ENCODE measurements at regions of chr4 and their contacts with region 1.

Region 1: DNA sequence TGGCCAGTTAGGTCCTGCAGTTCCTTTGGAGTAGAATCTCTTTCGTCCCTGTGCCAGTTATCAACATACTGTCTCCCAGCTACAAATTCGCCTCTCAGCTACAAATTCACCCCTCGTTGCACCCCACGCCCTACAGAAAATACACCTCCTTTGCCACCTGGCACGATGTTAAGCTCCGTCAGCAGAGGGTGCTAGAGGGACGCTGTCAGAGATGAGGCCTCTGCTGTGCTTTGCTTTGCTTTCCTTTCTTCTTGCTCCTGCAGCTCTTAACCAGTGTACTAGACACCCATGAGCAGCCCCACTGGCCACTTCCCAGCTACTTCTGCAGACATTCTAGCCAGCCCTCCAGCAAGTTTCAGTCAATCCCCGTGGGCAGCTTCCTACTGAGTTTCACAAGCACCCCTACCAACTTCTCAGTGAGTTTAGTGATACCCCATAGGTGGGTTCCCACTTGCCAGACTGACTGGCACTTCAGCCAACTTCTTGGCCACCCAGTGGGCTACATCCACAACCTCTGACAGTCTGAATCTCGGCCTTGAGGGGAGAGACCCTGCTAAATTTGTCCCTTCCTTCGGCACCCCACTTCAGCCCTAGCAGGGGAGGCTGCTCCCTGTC is 21.8 kb downstream of the HAUS3 start:
- DNase-seq: peak; percentile 90
- H3K4me3 Mint-ChIP-seq: no peak overlapping the region
- H3K27ac Mint-ChIP-seq: no peak overlapping the region
- H3K4me1 Mint-ChIP-seq: peaks cover 3% of the 10 kb centered on the region
- H3K27me3 Mint-ChIP-seq: peaks cover 4% of the 10 kb centered on the region

Region 2: GRCh38 chr4:2231082-2231481 is 11.0 kb after region 1 on chr4:
- CTCF ChIA-PET with region 1: interaction called, 17 read pairs
- DNase-seq: no peak
- H3K4me3 Mint-ChIP-seq: no peak overlapping the region
- H3K27ac Mint-ChIP-seq: no peak overlapping the region
- H3K4me1 Mint-ChIP-seq: peaks cover 8% of the 10 kb centered on the region
- H3K27me3 Mint-ChIP-seq: no peaks in the 10 kb centered on the region

Region 3: DNA sequence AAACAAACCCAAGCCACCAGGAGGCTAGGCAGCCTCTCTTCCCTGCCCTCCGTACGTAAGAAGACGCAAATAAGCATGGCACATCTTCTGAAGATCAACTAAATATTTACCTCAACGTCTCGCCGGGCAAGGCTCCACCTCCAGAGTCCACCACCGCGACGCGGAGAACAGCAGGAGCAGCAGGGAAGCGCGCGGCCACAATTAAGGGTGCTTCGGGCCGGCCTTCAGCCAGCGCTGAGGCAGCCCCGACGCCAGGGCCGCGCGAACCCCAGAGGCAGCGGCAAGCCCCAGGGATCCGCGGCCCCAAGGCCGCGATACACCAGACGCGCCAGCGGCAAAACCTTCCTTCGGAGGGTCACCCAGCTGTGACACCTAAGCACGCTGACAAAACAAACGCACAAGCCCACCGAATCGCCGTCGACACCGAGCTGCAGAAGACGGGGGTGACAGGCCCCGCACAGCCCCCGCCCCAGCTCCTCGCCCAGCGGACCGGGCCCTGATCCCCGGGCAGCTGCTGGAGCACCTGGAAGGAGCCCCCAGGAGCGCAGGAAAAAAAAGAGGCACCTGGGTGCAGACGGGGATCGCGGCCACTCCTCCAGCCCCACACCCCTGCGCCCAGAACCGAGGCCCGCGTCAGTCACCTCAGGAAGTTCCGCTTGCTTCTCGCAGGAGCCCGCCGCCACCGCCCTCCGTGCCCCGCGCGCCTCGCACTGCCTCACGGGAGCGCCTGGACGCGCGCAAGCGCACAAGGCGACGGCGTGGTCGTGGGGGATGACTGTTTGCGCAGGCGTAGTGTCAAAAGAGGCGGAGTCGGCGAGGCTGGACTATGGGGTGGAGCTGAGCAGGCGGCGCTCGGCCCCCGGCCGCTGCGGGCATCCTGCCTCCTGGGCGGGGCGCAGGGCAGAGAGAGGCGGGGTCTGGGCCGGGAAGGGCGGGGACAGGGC is 21.6 kb after region 1 on chr4 and contains the starts of genes HAUS3 and POLN:
- CTCF ChIA-PET with region 1: interaction called, 14 read pairs
- DNase-seq: peak; percentile 99
- H3K4me3 Mint-ChIP-seq: peak within 1 kb of the TSS; percentile 93
- H3K27ac Mint-ChIP-seq: peak within 1 kb of the TSS; percentile 95
- H3K4me1 Mint-ChIP-seq: peaks cover 57% of the 10 kb centered on the region
- H3K27me3 Mint-ChIP-seq: peaks cover 13% of the 10 kb centered on the region

Region 4: DNA sequence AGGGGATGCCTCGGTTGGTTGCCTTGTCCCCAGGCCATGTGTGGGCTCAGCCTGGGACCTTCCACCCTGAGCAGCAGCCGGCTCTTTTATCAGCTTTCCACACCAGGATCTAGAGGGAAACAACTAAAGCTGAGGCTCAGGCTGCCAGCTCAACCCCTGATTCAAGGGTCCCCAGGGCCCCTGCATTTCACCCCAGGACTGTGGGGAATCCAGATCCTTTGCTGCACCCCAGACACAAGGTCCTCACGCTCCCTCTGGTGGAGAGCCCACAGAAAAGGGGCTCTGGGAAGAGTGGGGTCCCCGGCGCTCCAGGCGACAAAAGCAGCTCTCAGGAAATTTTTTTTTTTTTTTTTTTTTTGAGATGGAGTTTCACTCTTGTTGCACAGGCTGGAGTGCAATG is 134.0 kb after region 1 on chr4:
- CTCF ChIA-PET with region 1: interaction called, 12 read pairs
- DNase-seq: peak; percentile 50
- H3K4me3 Mint-ChIP-seq: no peak overlapping the region
- H3K27ac Mint-ChIP-seq: no peak overlapping the region
- H3K4me1 Mint-ChIP-seq: peaks cover 4% of the 10 kb centered on the region
- H3K27me3 Mint-ChIP-seq: peaks cover 4% of the 10 kb centered on the region

Region 5: DNA sequence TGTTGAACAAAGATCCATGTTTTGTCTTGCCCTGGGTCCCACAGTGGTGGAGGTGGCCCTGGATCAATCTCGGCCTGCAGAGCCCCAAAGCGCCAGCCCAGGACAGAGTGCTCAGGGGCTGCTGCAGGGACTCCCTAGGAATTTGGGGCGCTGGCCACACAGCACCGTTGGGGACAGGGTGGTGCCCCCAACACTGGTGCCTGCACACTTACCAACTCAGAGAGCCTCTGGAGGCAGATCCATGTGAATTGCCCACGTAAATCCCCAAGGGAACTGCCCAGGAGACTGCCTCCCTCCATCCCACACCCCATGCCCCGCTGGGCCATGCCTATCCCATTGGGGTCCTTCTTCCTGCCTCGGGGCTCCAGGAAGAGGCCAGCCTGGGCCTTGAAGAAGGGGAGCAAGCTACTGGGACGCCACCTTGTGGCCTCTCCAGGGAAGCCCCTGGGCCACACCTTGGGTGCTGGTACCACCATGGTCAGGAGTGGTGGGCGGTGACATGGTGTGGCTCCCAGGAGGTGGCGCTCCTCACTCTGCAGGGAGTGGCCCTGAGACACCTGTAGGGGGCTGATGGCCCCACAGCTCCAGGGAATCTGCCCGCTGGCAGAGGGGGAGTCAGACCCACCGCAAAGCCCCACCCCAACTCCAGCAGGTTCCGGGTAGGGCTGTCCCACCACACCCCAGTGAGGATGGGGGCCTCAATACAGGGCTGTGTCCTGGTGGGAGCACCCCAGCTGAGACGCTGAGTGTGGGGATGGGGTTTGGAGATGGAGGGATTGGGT is 221.5 kb after region 1 on chr4:
- CTCF ChIA-PET with region 1: interaction called, 42 read pairs
- DNase-seq: peak; percentile 87
- H3K4me3 Mint-ChIP-seq: no peak overlapping the region
- H3K27ac Mint-ChIP-seq: no peak overlapping the region
- H3K4me1 Mint-ChIP-seq: peaks cover 4% of the 10 kb centered on the region
- H3K27me3 Mint-ChIP-seq: peaks cover 16% of the 10 kb centered on the region

Region 6: DNA sequence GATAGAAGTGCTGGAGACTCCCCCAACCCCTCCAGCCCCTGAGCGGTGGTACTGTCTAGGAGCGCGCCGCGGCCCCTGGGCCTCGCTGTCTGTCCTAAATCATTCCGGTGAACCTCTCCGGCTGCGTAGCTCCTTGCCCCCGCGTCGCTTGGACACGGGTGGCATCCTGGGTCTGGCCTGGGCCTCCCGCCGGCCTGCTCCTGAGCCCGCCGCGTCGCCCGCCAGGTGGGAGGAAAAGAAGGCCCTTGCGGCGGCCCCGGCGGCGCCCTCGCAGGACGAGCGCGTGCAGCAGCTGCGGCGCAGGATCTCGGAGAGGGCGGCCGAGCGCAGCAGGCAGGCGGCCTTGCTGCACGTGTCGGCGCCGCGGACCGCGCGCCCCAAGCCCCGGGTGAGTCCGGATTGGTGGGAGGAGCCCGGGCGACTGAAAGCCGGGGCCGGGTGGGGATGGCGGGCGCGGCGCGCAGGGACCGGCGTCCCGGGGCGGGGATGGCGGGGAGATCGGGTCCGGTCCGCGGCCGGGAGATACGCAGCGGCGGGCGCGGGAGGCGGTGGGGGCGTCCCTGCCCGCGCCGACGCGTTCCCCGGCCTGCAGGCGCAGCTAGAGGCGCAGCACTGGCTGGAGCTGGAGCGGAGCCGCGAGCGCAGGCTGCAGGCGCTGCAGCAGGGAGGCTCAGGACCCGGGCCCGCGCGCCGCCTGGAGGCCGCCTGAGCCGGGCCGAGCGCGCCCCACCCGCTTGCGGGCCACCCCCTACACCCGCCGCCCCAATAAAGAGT is 242.3 kb after region 1 on chr4:
- CTCF ChIA-PET with region 1: interaction called, 10 read pairs
- DNase-seq: peak; percentile 73
- H3K4me3 Mint-ChIP-seq: peak overlapping the region; percentile 50
- H3K27ac Mint-ChIP-seq: no peak overlapping the region
- H3K4me1 Mint-ChIP-seq: peaks cover 17% of the 10 kb centered on the region
- H3K27me3 Mint-ChIP-seq: peaks cover 56% of the 10 kb centered on the region

Measured in activated naive CD4-positive, alpha-beta T cell treated with anti-CD3 and anti-CD28 coated beads, Interleukin-2, amount 10 ng/mL, durations not matched to agents 7 days and 5 days (primary cell).